Natural killer cell (primary cell): ENCODE measurements at regions of chr11 and their contacts with region 1.

Region 1: GRCh38 chr11:8566613-8567210 is 27.3 kb downstream of the STK33 start:
- DNase-seq: peak in 1 of 2 donors; percentile 53
- ATAC-seq: peak in 1 of 3 donors; percentile 47
- H3K4me3 ChIP-seq: no peak overlapping the region
- H3K4me3 Mint-ChIP-seq: no peak overlapping the region
- H3K27ac ChIP-seq: no peak overlapping the region
- H3K27ac Mint-ChIP-seq: no peak overlapping the region
- H3K4me1 ChIP-seq: no peaks in the 10 kb centered on the region
- H3K4me1 Mint-ChIP-seq: no peaks in the 10 kb centered on the region
- H3K27me3 ChIP-seq: no peaks in the 10 kb centered on the region
- H3K27me3 Mint-ChIP-seq: peaks cover 19 to 60% of the 10 kb centered on the region in 2 donors
- CTCF ChIP-seq: peak; percentile 52

Region 2: GRCh38 chr11:8033305-8034105 is 533.2 kb before region 1 on chr11:
- intact Hi-C with region 1: loop called (anchors 2 kb)
- DNase-seq: peak; percentile 29 to 73
- ATAC-seq: peak; percentile 72 to 93 (median 76)
- H3K4me3 ChIP-seq: no peak overlapping the region
- H3K4me3 Mint-ChIP-seq: no peak overlapping the region
- H3K27ac ChIP-seq: no peak overlapping the region
- H3K27ac Mint-ChIP-seq: no peak overlapping the region
- H3K4me1 ChIP-seq: peaks cover 9% of the 10 kb centered on the region
- H3K4me1 Mint-ChIP-seq: peaks cover 7 to 9% of the 10 kb centered on the region in 2 donors
- H3K27me3 ChIP-seq: peaks cover 2% of the 10 kb centered on the region
- H3K27me3 Mint-ChIP-seq: peaks cover 21 to 41% of the 10 kb centered on the region in 2 donors
- CTCF ChIP-seq: peak; percentile 63

Region 3: GRCh38 chr11:8225589-8226036 is 341.1 kb before region 1 on chr11:
- intact Hi-C with region 1: loop called (anchors 1 kb)
- DNase-seq: peak; percentile 56 to 77
- ATAC-seq: peak in 1 of 3 donors; percentile 75
- H3K4me3 ChIP-seq: no peak overlapping the region
- H3K4me3 Mint-ChIP-seq: no peak overlapping the region
- H3K27ac ChIP-seq: no peak overlapping the region
- H3K27ac Mint-ChIP-seq: no peak overlapping the region
- H3K4me1 ChIP-seq: peaks cover 7% of the 10 kb centered on the region
- H3K4me1 Mint-ChIP-seq: peaks cover 5 to 10% of the 10 kb centered on the region in 2 donors
- H3K27me3 ChIP-seq: peaks cover 4% of the 10 kb centered on the region
- H3K27me3 Mint-ChIP-seq: peaks cover 5 to 26% of the 10 kb centered on the region in 2 donors
- CTCF ChIP-seq: peak; percentile 84

Region 4: DNA sequence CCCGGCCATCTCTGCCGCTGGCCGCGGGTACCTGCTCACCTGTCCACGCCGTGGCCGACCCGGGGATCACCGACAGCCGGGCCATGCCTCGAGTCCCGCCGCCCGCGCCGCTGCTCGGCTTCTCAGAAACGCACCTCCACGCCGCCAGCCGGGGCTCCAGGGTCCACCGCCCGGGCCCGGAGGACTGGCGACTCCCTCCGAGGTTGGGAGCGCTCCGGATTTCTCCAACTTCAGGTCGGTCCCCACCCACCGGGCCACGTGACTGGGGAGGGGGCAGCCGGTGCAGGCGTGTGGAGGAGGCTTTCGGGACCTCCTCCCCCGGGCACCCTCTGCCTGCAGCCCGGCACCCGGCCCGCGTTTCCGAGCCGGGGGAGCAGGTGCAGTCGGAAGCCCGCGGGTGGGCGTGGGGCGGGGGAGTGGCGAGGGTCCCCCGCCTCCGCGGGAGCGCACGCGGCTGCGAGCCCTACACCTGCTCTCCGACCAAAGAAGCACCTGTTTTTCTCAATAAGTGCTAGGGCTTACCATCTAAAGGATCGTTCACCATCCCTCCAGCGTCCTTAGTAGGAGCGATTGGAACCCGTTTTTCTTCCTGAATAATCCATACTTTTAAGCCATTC is 437.7 kb after region 1 on chr11:
- intact Hi-C with region 1: no loop called
- DNase-seq: peak in 1 of 2 donors; percentile 43
- ATAC-seq: no peak
- H3K4me3 ChIP-seq: peak overlapping the region; percentile 24
- H3K4me3 Mint-ChIP-seq: peak overlapping the region; percentile 80
- H3K27ac ChIP-seq: no peak overlapping the region
- H3K27ac Mint-ChIP-seq: peak overlapping the region in 1 of 2 donors; percentile 62
- H3K4me1 ChIP-seq: peaks cover 13% of the 10 kb centered on the region
- H3K4me1 Mint-ChIP-seq: peaks cover 6 to 18% of the 10 kb centered on the region in 2 donors
- H3K27me3 ChIP-seq: peaks cover 32% of the 10 kb centered on the region
- H3K27me3 Mint-ChIP-seq: peaks cover 25 to 53% of the 10 kb centered on the region in 2 donors
- CTCF ChIP-seq: no peak